CD8-positive, alpha-beta T cell (primary cell): ENCODE measurements at regions of chr1 and their contacts with region 1.

Region 1: GRCh38 chr1:2391041-2391930 is at the starts of genes MORN1 and RER1:
- DNase-seq: peak; percentile 97 to 100 (median 99)
- ATAC-seq: peak; percentile 95
- H3K4me3 ChIP-seq: peak within 1 kb of the TSS; percentile 57 to 90
- H3K4me3 Mint-ChIP-seq: peak within 1 kb of the TSS; percentile 91
- H3K27ac ChIP-seq: peak within 1 kb of the TSS; percentile 67 to 70
- H3K27ac Mint-ChIP-seq: peak within 1 kb of the TSS; percentile 94
- H3K4me1 ChIP-seq: peaks cover 37% of the 10 kb centered on the region
- H3K4me1 Mint-ChIP-seq: peaks cover 30% of the 10 kb centered on the region
- H3K27me3 ChIP-seq: no peaks in the 10 kb centered on the region
- H3K27me3 Mint-ChIP-seq: no peaks in the 10 kb centered on the region
- CTCF ChIP-seq: no peak
- total RNA-seq, gene MORN1: 4.9 to 5.0 TPM
- total RNA-seq, gene RER1: 54.6 to 58.7 TPM

Region 2: GRCh38 chr1:1906185-1907097 is 484.8 kb before region 1 on chr1:
- CTCF ChIA-PET with region 1: no interaction called
- POLR2A ChIA-PET with region 1: no interaction called
- intact Hi-C with region 1: loop called in 1 of 2 experiments (anchors 1 kb)
- DNase-seq: peak; percentile 39 to 80 (median 68)
- ATAC-seq: peak; percentile 21
- H3K4me3 ChIP-seq: no peak overlapping the region
- H3K4me3 Mint-ChIP-seq: peak overlapping the region; percentile 54
- H3K27ac ChIP-seq: no peak overlapping the region
- H3K27ac Mint-ChIP-seq: no peak overlapping the region
- H3K4me1 ChIP-seq: peaks cover 10% of the 10 kb centered on the region
- H3K4me1 Mint-ChIP-seq: peaks cover 11% of the 10 kb centered on the region
- H3K27me3 ChIP-seq: peaks cover 0 to 3% of the 10 kb centered on the region in 2 experiments
- H3K27me3 Mint-ChIP-seq: no peaks in the 10 kb centered on the region
- CTCF ChIP-seq: peak; percentile 86

Region 3: GRCh38 chr1:2194898-2195673 is 196.2 kb before region 1 on chr1:
- CTCF ChIA-PET with region 1: interaction called, 332 read pairs
- POLR2A ChIA-PET with region 1: interaction called, 15 read pairs
- intact Hi-C with region 1: loop called in 1 of 2 experiments (anchors 1 kb)
- DNase-seq: peak; percentile 81 to 97 (median 88)
- ATAC-seq: peak; percentile 71
- H3K4me3 ChIP-seq: peak overlapping the region; percentile 64 to 66
- H3K4me3 Mint-ChIP-seq: peak overlapping the region; percentile 87
- H3K27ac ChIP-seq: peak overlapping the region; percentile 77 to 93
- H3K27ac Mint-ChIP-seq: peak overlapping the region; percentile 93
- H3K4me1 ChIP-seq: peaks cover 42% of the 10 kb centered on the region
- H3K4me1 Mint-ChIP-seq: peaks cover 34% of the 10 kb centered on the region
- H3K27me3 ChIP-seq: no peaks in the 10 kb centered on the region
- H3K27me3 Mint-ChIP-seq: no peaks in the 10 kb centered on the region
- CTCF ChIP-seq: peak; percentile 79

Region 4: GRCh38 chr1:2300851-2301606 is 90.3 kb before region 1 on chr1:
- CTCF ChIA-PET with region 1: no interaction called
- POLR2A ChIA-PET with region 1: interaction called, 4 read pairs
- intact Hi-C with region 1: loop called in 1 of 2 experiments (anchors 2 kb)
- DNase-seq: peak; percentile 86 to 99 (median 94)
- ATAC-seq: peak; percentile 75
- H3K4me3 ChIP-seq: peak overlapping the region; percentile 62 to 65
- H3K4me3 Mint-ChIP-seq: peak overlapping the region; percentile 82
- H3K27ac ChIP-seq: peak overlapping the region; percentile 99 to 100
- H3K27ac Mint-ChIP-seq: peak overlapping the region; percentile 98
- H3K4me1 ChIP-seq: peaks cover 62% of the 10 kb centered on the region
- H3K4me1 Mint-ChIP-seq: peaks cover 57% of the 10 kb centered on the region
- H3K27me3 ChIP-seq: no peaks in the 10 kb centered on the region
- H3K27me3 Mint-ChIP-seq: no peaks in the 10 kb centered on the region
- CTCF ChIP-seq: no peak

Region 5: DNA sequence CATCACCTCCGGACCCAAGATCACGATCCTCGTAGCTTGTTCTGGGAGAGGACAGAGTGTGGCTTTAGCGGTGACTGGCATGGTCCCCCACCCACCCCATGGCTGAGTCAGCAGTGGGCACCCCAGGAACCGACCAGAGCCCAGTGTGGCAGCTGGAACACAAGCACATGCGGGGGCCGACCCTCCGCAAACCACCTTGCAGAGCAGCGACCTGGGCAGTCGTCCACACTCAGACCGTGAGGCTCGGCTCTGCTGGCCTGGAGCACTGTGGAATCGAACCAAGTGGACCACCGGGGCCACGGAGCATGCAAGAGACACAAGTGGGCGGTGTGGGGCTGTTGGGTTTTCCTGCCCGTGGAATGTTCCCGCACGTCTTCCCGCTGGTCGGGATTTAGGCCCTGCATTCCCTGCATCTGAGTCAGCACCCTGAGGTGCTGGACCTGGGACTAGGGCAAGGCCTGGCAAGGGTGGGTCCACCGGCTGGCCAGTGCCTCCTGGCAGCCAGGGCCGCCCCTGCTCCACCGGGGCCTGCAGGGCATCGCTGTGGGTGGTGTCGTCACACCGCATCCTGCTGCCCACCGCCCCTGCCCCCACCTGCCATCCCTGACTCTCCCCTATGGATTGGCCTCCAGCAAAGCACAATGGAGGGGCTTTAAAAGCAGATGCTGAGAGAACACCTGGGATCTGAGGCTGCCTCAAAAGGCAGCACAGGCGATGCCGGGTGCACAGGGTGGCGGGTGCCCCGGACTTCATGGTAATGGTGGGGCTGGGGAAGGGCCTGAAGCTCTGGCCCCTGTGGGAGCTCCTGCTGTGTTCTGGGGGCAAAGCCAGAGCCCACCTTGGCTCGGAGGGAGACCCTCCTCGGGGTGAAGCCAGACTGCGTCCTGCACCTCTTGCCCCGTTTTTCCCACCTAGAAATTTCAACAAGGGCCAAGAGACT is 18.5 kb before region 1 on chr1:
- CTCF ChIA-PET with region 1: no interaction called
- POLR2A ChIA-PET with region 1: no interaction called
- intact Hi-C with region 1: no loop called
- DNase-seq: peak in 1 of 9 experiments; percentile 9
- ATAC-seq: no peak
- H3K4me3 ChIP-seq: no peak overlapping the region
- H3K4me3 Mint-ChIP-seq: no peak overlapping the region
- H3K27ac ChIP-seq: no peak overlapping the region
- H3K27ac Mint-ChIP-seq: no peak overlapping the region
- H3K4me1 ChIP-seq: no peaks in the 10 kb centered on the region
- H3K4me1 Mint-ChIP-seq: no peaks in the 10 kb centered on the region
- H3K27me3 ChIP-seq: no peaks in the 10 kb centered on the region
- H3K27me3 Mint-ChIP-seq: no peaks in the 10 kb centered on the region
- CTCF ChIP-seq: no peak

Region 6: GRCh38 chr1:2480986-2481364 is 89.7 kb after region 1 on chr1:
- CTCF ChIA-PET with region 1: no interaction called
- POLR2A ChIA-PET with region 1: no interaction called
- intact Hi-C with region 1: no loop called
- DNase-seq: no peak
- ATAC-seq: no peak
- H3K4me3 ChIP-seq: no peak overlapping the region
- H3K4me3 Mint-ChIP-seq: no peak overlapping the region
- H3K27ac ChIP-seq: no peak overlapping the region
- H3K27ac Mint-ChIP-seq: no peak overlapping the region
- H3K4me1 ChIP-seq: no peaks in the 10 kb centered on the region
- H3K4me1 Mint-ChIP-seq: peaks cover 4% of the 10 kb centered on the region
- H3K27me3 ChIP-seq: no peaks in the 10 kb centered on the region
- H3K27me3 Mint-ChIP-seq: no peaks in the 10 kb centered on the region
- CTCF ChIP-seq: no peak

Region 7: DNA sequence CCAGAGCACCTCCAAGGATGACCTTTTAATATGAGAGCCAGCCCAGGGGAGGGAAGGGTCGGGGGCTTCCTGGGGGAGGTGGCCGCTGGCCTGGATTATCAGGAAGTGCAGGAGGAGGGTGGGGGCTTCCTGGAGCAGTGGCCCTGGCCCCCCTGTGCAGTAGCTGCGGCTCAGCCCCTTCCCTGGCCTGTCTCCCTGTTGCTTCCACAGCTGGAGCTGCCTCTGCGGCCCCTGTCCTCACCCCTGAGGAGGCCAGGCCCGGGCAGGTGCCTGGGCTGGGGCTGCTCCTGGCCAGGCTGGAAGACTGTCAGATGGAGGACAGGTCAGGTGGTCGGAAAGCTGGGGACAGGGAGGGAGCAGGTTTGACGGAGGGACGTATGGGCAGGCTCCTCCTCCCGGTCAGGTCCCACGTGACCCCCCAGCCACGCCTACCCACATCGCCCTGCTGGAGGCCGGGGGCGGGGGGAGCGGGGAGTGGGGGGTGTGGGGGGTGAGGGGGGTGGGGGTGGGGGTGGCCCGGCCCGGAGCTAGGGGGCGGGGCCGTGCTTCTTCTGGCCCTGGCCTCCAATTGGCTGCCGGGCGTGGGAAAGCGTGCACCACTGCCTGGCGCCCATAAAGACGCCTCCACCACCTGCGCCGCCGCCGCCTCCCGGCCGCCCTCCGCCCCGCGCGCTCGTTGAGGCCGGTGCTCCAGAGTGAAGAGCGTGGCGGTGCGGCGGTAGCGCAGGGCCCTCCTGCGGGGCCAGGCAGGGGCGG is 154.7 kb after region 1 on chr1:
- CTCF ChIA-PET with region 1: interaction called, 6 read pairs
- POLR2A ChIA-PET with region 1: interaction called, 4 read pairs
- intact Hi-C with region 1: loop called (anchors 1 kb)
- DNase-seq: peak; percentile 85 to 96 (median 89)
- ATAC-seq: peak; percentile 42
- H3K4me3 ChIP-seq: peak overlapping the region; percentile 87 to 91
- H3K4me3 Mint-ChIP-seq: peak overlapping the region; percentile 91
- H3K27ac ChIP-seq: peak overlapping the region; percentile 79 to 99
- H3K27ac Mint-ChIP-seq: peak overlapping the region; percentile 96
- H3K4me1 ChIP-seq: peaks cover 40% of the 10 kb centered on the region
- H3K4me1 Mint-ChIP-seq: peaks cover 31% of the 10 kb centered on the region
- H3K27me3 ChIP-seq: no peaks in the 10 kb centered on the region
- H3K27me3 Mint-ChIP-seq: no peaks in the 10 kb centered on the region
- CTCF ChIP-seq: no peak

Region 8: DNA sequence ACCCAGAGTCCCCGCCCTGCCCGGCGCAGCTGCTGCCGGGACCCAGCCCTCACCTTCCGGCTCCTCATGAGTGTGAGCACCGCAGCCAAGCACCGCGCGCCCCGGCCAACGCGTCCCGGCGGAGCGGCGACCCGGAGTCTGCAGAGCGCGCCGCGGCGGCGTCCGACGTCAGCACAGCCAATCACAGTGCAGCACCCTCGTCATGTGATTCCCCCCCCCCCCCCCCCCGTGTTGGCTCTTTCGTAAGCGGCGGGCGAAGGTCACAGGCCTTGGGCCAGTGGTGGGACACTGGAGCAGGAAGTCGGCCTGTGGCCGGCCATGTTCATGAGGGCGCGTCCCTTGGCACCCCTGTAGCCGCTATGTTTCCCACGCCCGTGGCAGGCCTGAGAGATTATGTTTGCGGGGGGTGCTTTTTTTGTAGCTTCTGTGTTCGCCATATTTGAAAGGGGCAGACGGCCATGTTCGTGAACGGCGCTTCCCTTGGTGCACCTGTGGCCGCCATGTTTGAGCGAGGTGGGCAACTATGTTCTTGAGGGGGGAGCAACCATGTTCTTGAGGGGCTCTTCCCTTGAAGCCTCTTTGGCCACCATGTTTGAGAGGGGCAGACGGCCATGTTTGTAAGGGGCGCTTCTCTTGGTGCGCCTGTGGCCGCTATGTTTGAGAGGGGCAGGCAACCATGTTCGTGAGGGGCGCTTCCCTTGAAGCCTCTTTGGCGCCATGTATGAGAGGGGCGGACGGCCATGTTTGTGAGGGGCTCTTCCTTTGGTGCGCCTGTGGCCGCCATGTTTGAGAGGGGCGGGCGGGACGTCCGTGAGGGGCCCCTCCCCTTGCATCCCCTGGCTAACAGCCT is 1509.1 kb after region 1 on chr1 and contains the start of gene C1orf174:
- CTCF ChIA-PET with region 1: no interaction called
- POLR2A ChIA-PET with region 1: no interaction called
- intact Hi-C with region 1: loop called in 1 of 2 experiments (anchors 10 kb)
- DNase-seq: peak; percentile 88 to 99 (median 93)
- ATAC-seq: peak; percentile 83
- H3K4me3 ChIP-seq: peak within 1 kb of the TSS; percentile 55 to 68
- H3K4me3 Mint-ChIP-seq: peak within 1 kb of the TSS; percentile 88
- H3K27ac ChIP-seq: peak within 1 kb of the TSS; percentile 69 to 97
- H3K27ac Mint-ChIP-seq: peak within 1 kb of the TSS; percentile 92
- H3K4me1 ChIP-seq: peaks cover 49% of the 10 kb centered on the region
- H3K4me1 Mint-ChIP-seq: peaks cover 55% of the 10 kb centered on the region
- H3K27me3 ChIP-seq: no peaks in the 10 kb centered on the region
- H3K27me3 Mint-ChIP-seq: no peaks in the 10 kb centered on the region
- CTCF ChIP-seq: no peak
- total RNA-seq, gene C1orf174: 19.1 to 20.9 TPM